ENCODE measurements at regions of chr2 and their contacts with region 1.

Region 1: DNA sequence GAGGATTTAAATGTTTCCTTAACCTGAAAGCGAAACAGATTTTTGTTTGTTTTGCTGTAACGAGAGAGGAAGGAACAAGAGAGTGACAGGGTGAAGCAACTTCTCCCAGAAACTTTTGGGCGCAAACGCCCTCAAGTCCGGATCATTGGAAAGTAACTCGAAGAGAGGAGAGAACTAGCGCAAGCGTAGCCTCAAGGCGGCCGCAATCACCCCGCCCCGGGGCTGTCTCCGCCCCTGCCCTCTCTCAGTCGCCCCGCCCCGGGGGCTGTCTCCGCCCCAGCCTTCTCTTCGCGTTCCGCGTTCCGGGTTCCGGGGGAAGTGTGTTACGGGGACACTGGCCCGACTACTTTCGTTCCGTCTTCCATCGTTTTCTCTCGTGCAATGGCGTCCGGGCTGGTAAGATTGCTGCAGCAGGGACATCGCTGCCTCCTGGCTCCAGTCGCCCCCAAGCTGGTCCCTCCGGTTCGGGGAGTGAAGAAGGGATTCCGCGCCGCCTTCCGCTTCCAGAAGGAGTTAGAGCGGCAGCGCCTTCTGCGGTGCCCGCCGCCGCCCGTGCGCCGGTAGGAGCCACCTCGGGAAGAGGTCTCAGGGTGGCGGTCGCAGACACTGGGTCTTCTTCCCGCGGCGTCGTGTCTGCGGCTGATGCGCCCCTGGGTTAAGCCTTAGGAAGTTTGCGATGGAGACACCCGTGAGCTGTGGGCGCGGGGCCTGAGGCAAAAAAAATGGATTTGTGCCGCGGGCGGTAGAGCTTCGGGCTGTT is at the start of gene MRPL44:
- DNase-seq: peak; percentile 76
- ATAC-seq: peak; percentile 99
- H3K4me3 ChIP-seq: peak within 1 kb of the TSS; percentile 87
- H3K27ac ChIP-seq: peak within 1 kb of the TSS; percentile 87
- H3K4me1 ChIP-seq: peaks cover 24% of the 10 kb centered on the region
- H3K27me3 ChIP-seq: no peaks in the 10 kb centered on the region
- CTCF ChIP-seq: no peak
- EP300 ChIP-seq: no peak
- POLR2A ChIP-seq: peak; percentile 96
- RAD21 ChIP-seq: no peak
- polyA plus RNA-seq, gene MRPL44: 18.3 to 22.0 TPM

Region 2: GRCh38 chr2:223779877-223780276 is 177.4 kb before region 1 on chr2:
- CTCF ChIA-PET with region 1: no interaction called
- POLR2A ChIA-PET with region 1: no interaction called
- RAD21 ChIA-PET with region 1: no interaction called
- SMC1A ChIA-PET with region 1: no interaction called
- in situ Hi-C with region 1: no loop called
- intact Hi-C with region 1: loop called (anchors 5 kb)
- DNase-seq: no peak
- ATAC-seq: peak; percentile 91
- H3K4me3 ChIP-seq: no peak overlapping the region
- H3K27ac ChIP-seq: no peak overlapping the region
- H3K4me1 ChIP-seq: no peaks in the 10 kb centered on the region
- H3K27me3 ChIP-seq: no peaks in the 10 kb centered on the region
- CTCF ChIP-seq: peak; percentile 37 to 45 (median 42); a peak in 5 of 6 replicates
- EP300 ChIP-seq: no peak
- POLR2A ChIP-seq: no peak
- RAD21 ChIP-seq: peak; percentile 69

Region 3: DNA sequence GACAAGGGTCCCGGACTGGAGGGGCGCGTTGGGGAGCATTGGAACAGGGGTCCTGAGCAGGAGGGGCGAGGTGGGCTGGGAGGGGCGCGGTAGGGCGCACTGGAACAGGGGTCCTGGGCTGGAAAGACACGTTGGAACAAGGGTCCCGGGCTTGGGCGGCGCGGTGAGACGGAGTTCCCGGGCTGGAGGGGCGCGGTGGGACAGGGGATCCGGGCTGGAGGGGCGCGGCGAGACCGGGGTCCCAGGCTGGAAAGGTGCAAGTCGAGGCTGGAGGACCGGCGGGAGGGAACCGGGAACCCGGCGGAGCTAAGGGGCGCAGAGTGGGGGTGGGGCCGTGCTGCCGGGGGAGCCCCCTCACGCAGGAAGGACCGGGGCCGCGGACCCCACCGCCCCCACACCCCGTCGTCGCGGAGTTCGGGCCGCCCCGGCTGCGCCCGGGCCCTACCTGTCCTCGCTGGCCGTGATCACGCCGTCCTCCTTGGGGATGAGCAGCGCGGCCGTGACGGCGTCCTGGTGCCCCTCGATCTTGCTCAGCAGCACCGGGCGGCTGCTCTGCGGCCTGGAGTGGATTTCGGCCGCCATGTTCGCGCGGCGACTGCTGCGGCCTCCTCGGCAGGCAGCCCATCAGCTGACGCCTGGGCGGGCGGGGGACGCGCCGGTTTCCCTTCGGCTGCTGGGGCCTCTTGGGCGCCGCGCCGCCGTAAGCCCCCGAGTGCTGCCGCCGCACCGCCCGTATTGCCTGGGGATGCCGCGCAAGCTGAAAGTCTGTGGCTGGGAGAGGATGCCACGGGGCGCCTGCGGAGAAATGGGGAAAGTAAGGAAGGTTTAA is 12.4 kb before region 1 on chr2 and contains the start of gene WDFY1:
- CTCF ChIA-PET with region 1: interaction called, 15 read pairs
- POLR2A ChIA-PET with region 1: interaction called, 8 read pairs
- RAD21 ChIA-PET with region 1: interaction called, 6 read pairs
- SMC1A ChIA-PET with region 1: interaction called, 7 read pairs
- in situ Hi-C with region 1: no loop called
- intact Hi-C with region 1: loop called (anchors 2 kb)
- DNase-seq: no peak
- ATAC-seq: peak; percentile 94
- H3K4me3 ChIP-seq: peak within 1 kb of the TSS; percentile 75
- H3K27ac ChIP-seq: peak within 1 kb of the TSS; percentile 76
- H3K4me1 ChIP-seq: peaks cover 19% of the 10 kb centered on the region
- H3K27me3 ChIP-seq: no peaks in the 10 kb centered on the region
- CTCF ChIP-seq: no peak
- EP300 ChIP-seq: no peak
- POLR2A ChIP-seq: peak; percentile 98
- RAD21 ChIP-seq: no peak
- polyA plus RNA-seq, gene WDFY1: 2.9 to 4.6 TPM

Region 4: GRCh38 chr2:224284134-224284946 is 327.1 kb after region 1 on chr2:
- CTCF ChIA-PET with region 1: interaction called, 11 read pairs
- POLR2A ChIA-PET with region 1: no interaction called
- RAD21 ChIA-PET with region 1: no interaction called
- SMC1A ChIA-PET with region 1: no interaction called
- in situ Hi-C with region 1: no loop called
- intact Hi-C with region 1: no loop called
- DNase-seq: no peak
- ATAC-seq: peak; percentile 52
- H3K4me3 ChIP-seq: no peak overlapping the region
- H3K27ac ChIP-seq: no peak overlapping the region
- H3K4me1 ChIP-seq: no peaks in the 10 kb centered on the region
- H3K27me3 ChIP-seq: no peaks in the 10 kb centered on the region; a peak in 1 of 4 replicates
- CTCF ChIP-seq: peak; percentile 32 to 50 (median 45); a peak in 4 of 6 replicates
- EP300 ChIP-seq: no peak
- POLR2A ChIP-seq: no peak
- RAD21 ChIP-seq: peak; percentile 68

Region 5: DNA sequence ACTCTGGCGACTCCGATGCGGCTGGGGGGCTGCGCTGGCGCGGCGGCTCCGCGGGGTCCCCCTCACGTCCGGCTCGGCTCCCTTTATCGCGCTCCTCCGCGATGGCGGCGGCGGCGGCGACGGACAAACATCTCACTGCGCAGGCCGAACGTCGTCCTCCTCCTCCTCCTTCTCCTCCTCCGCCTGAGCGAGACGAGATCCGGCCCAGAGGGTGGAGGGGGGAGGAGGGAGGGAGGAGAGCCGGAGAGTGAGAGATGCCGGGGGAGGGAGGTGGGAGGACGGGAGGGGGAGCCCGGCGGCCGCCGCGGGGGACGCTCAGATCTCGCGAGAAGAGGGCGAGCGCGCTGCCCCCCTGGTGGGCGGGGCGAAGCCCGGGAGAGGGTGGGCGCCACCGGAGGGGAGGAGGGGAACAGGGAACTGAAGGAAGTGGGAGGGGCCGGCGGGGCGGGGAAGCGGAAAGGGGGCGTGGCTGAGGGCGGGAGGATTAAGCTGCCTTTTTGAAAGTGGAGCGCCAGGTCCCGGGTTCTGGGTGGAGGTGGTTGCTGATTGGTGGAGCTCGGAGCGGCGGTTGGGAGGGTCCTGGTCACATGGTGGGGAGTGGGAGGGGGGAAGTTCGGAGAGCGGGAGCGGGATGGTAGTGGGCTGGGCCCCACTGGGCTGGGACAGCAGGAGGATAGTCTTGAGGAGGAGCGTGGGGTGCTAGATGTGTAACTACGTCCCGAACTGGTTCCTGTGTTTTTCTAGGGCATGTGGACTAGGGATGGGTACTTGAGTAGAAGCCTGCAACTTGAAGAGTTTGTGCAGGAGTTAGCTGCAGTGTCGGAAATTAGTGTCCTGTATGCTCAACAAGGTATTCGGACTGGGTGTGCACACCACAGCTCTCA is 628.2 kb after region 1 on chr2 and contains the start of gene CUL3:
- CTCF ChIA-PET with region 1: no interaction called
- POLR2A ChIA-PET with region 1: no interaction called
- RAD21 ChIA-PET with region 1: no interaction called
- SMC1A ChIA-PET with region 1: no interaction called
- in situ Hi-C with region 1: loop called (anchors 10 kb)
- intact Hi-C with region 1: no loop called
- DNase-seq: peak; percentile 90
- ATAC-seq: peak; percentile 88
- H3K4me3 ChIP-seq: peak within 1 kb of the TSS; percentile 96
- H3K27ac ChIP-seq: peak within 1 kb of the TSS; percentile 88
- H3K4me1 ChIP-seq: no peaks in the 10 kb centered on the region
- H3K27me3 ChIP-seq: no peaks in the 10 kb centered on the region
- CTCF ChIP-seq: no peak
- EP300 ChIP-seq: 0 out of 4 replicates have a peak, but pooled peaks of 1 of the 2 experiments have one; percentile 10
- POLR2A ChIP-seq: peak; percentile 90
- RAD21 ChIP-seq: no peak
- polyA plus RNA-seq, gene CUL3: 49.0 to 71.9 TPM